IMR-90 (cell line): ENCODE measurements at regions of chr4 and their contacts with region 1.

Region 1: DNA sequence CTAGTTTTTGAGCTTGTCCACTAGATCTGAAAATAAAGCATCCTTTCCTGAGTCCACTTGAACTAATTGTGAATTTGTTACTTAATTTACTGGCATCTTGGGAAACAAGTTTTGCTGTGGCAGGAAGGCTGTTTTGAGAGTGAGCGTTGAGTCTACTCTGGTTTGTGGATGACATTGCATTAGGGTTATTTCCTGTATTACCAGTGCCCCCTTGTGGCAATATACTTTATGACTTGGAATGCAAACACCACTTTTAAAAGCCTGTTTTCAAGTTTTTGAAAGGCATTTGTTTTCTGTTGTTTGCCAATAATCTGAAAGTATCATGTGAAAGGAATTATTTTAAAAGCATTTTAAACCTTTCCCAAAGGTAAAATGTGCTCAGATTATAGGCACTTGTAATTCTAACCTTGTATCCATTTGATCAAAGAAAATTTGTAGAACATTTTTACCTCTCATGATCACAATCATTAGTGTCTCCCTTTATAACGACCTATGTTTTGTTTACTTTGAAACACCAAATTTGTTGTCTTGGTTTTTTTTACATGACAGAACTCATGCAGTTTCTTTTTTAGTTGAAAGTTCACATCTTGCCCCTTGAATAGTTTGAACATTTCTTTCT is 18.0 kb upstream of the CYP2U1 start:
- DNase-seq: peak; percentile 76
- ATAC-seq: peak; percentile 85
- H3K4me3 ChIP-seq: no peak overlapping the region
- H3K27ac ChIP-seq: no peak overlapping the region
- H3K4me1 ChIP-seq: no peaks in the 10 kb centered on the region
- H3K27me3 ChIP-seq: no peaks in the 10 kb centered on the region
- CTCF ChIP-seq: peak; percentile 88
- POLR2A ChIP-seq: no peak
- RAD21 ChIP-seq: peak; percentile 92

Region 2: DNA sequence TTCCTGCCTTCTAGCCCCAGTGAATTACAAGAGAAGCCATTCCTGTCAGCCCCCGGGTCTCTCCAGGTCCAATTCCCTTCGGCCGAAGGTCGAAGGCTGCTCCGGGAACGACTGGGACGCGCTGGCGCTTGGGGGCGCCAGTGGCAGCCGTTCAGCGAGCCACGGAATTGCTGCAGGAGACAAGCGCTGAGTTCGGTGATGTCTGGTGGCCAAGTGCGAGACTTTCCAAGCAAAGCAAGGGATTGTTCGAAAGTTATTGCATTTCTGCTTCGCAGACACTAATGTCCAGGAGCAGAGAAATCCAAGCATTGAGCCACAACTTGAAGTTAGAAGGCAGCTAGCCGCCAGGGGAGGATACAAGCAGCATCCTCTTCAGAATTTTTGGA is 876.2 kb before region 1 on chr4:
- CTCF ChIA-PET with region 1: no interaction called
- POLR2A ChIA-PET with region 1: no interaction called
- dilution Hi-C with region 1: no loop called
- in situ Hi-C with region 1: no loop called
- intact Hi-C with region 1: loop called (anchors 5 kb)
- DNase-seq: peak; percentile 2
- ATAC-seq: peak; percentile 52
- H3K4me3 ChIP-seq: no peak overlapping the region
- H3K27ac ChIP-seq: no peak overlapping the region
- H3K4me1 ChIP-seq: no peaks in the 10 kb centered on the region
- H3K27me3 ChIP-seq: peaks cover 37% of the 10 kb centered on the region
- CTCF ChIP-seq: peak; percentile 44
- POLR2A ChIP-seq: no peak
- RAD21 ChIP-seq: peak; percentile 29

Region 3: GRCh38 chr4:107196312-107196711 is 717.1 kb before region 1 on chr4:
- CTCF ChIA-PET with region 1: interaction called, 4 read pairs
- POLR2A ChIA-PET with region 1: no interaction called
- dilution Hi-C with region 1: no loop called
- in situ Hi-C with region 1: no loop called
- intact Hi-C with region 1: loop called (anchors 5 kb)
- DNase-seq: no peak
- ATAC-seq: no peak
- H3K4me3 ChIP-seq: no peak overlapping the region
- H3K27ac ChIP-seq: no peak overlapping the region
- H3K4me1 ChIP-seq: no peaks in the 10 kb centered on the region
- H3K27me3 ChIP-seq: no peaks in the 10 kb centered on the region
- CTCF ChIP-seq: no peak
- POLR2A ChIP-seq: no peak
- RAD21 ChIP-seq: no peak

Region 4: DNA sequence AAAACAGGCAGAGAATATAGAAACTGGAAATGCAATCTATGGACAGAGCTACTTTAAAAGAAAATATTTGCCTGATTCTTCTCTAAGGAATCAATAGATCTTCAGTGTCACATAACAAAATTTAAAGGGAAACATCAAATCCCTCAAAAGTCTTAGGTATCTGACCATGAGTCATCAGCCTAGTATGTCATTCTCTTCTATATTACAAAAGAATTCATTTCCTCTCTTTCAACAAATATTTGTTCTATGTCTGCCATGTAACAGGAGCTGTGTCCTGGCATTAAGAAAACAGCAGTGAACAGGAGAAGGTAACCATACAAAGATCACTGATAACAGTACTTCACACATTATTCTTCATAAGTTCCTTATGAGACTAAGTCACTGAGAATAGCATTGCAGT is 633.7 kb before region 1 on chr4:
- CTCF ChIA-PET with region 1: no interaction called
- POLR2A ChIA-PET with region 1: no interaction called
- dilution Hi-C with region 1: no loop called
- in situ Hi-C with region 1: no loop called
- intact Hi-C with region 1: loop called (anchors 10 kb)
- DNase-seq: peak; percentile 39
- ATAC-seq: peak; percentile 36
- H3K4me3 ChIP-seq: no peak overlapping the region
- H3K27ac ChIP-seq: no peak overlapping the region
- H3K4me1 ChIP-seq: peaks cover 3% of the 10 kb centered on the region; the same call in 1 of the 2 replicates
- H3K27me3 ChIP-seq: no peaks in the 10 kb centered on the region
- CTCF ChIP-seq: no peak
- POLR2A ChIP-seq: no peak
- RAD21 ChIP-seq: no peak

Region 5: DNA sequence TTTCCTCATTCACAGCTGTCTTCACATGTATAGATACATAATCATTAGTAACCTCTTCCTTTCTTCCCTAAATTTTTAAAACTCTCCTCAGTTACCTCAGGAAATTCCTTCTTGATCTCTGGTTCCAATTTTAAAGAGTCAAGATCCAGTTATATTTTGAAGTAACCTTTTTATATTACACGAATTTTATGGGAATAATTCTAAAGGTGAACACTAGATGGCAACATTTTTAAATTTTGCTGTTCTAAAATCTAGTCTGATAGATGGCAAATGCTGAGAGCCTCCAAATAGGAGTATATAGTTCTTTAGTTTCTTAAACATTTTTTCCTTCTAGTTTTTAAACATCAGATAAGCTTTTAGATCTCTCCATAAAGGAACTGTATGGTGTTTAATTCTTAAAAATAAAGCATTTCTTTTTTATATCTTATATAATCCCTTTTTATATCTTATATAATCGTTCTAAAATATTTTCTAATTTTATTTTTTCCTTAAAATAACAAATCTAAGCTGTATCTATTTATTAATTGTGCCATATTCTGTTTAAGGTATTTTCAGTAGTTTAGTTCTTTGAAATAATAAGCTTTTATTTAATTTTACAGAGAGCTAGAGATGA is 155.4 kb before region 1 on chr4:
- CTCF ChIA-PET with region 1: interaction called, 6 read pairs
- POLR2A ChIA-PET with region 1: no interaction called
- dilution Hi-C with region 1: no loop called
- in situ Hi-C with region 1: loop called (anchors 5 kb)
- intact Hi-C with region 1: loop called (anchors 1 kb)
- DNase-seq: peak; percentile 44
- ATAC-seq: peak; percentile 57; the same call in 1 of the 2 replicates
- H3K4me3 ChIP-seq: no peak overlapping the region
- H3K27ac ChIP-seq: no peak overlapping the region
- H3K4me1 ChIP-seq: no peaks in the 10 kb centered on the region
- H3K27me3 ChIP-seq: peaks cover 12% of the 10 kb centered on the region
- CTCF ChIP-seq: peak; percentile 52
- POLR2A ChIP-seq: no peak
- RAD21 ChIP-seq: peak; percentile 50

Region 6: GRCh38 chr4:107824353-107825071 is 88.9 kb before region 1 on chr4 and contains the start of gene SGMS2:
- CTCF ChIA-PET with region 1: no interaction called
- POLR2A ChIA-PET with region 1: no interaction called
- dilution Hi-C with region 1: no loop called
- in situ Hi-C with region 1: no loop called
- intact Hi-C with region 1: loop called (anchors 5 kb)
- DNase-seq: peak; percentile 84
- ATAC-seq: peak; percentile 93
- H3K4me3 ChIP-seq: peak within 1 kb of the TSS; percentile 64
- H3K27ac ChIP-seq: peak within 1 kb of the TSS; percentile 32
- H3K4me1 ChIP-seq: peaks cover 2% of the 10 kb centered on the region
- H3K27me3 ChIP-seq: peaks cover 7% of the 10 kb centered on the region
- CTCF ChIP-seq: no peak
- POLR2A ChIP-seq: peak; percentile 83
- RAD21 ChIP-seq: peak; percentile 6; the same call in 1 of the 2 replicates
- total RNA-seq, gene SGMS2: 37.5 and 57.5 TPM in 2 replicates

Region 7: DNA sequence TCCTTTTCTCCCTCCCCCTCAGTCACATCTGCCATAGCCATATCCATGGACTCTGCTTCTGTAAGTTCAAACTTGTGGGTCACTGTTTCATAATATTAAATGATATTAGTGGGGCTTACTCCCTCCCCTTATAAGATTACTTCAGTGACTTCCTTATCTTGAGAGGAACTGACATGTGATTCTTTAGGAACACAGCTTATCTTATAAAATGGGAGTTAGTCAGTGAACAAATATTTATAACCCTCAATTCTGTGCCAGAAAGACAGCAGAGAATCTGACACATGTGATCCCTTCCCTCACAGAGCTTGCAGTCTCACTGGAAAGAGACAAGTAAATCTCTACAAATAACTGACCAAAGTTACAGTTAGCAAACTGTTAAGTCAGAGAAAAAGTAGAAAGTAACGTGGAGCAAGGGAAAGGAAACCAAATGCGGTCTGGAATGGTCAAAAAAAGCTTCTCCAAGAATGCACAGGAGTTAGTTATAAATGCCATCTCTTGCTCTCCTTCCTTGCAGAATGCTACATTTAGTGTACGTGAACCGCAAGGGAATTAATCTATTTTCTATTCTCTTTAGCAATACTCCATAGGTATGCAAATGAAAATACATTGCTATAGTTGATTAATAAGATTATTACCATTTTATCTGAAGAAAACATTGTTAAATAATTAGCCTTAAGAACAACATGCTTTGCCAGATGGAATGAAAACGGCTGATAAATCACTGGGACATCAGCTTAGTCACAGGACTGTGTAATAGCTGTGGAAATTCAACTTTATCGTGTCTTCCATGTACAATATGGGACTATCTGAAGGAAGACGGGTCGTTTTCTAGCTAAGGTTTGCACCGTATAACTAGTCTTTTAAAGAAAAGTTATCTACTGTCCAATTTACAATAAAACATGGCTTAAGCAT is 59.7 kb before region 1 on chr4:
- CTCF ChIA-PET with region 1: no interaction called
- POLR2A ChIA-PET with region 1: no interaction called
- dilution Hi-C with region 1: no loop called
- in situ Hi-C with region 1: no loop called
- intact Hi-C with region 1: no loop called
- DNase-seq: peak; percentile 72
- ATAC-seq: peak; percentile 76
- H3K4me3 ChIP-seq: no peak overlapping the region
- H3K27ac ChIP-seq: no peak overlapping the region
- H3K4me1 ChIP-seq: no peaks in the 10 kb centered on the region
- H3K27me3 ChIP-seq: no peaks in the 10 kb centered on the region
- CTCF ChIP-seq: no peak
- POLR2A ChIP-seq: no peak
- RAD21 ChIP-seq: no peak

Region 8: DNA sequence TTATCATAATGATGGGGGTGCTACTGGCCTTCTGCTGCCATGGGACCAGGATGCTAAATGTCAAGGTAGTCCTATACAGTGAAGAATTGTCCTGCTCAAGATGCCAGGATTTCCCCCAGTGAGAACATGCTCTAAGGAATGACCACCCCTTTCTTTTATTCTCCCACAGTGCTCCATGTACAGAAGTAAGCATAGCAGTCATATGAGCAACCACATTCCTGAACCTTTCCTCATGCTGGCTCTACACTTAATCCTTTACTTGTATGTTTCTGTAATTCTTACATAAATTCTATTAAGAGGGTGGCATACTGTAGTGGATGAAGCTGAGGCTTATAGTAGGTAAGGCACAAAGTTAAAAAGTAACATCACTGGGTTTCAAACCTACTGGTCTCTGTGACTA is 38.2 kb after region 1 on chr4:
- CTCF ChIA-PET with region 1: no interaction called
- POLR2A ChIA-PET with region 1: no interaction called
- dilution Hi-C with region 1: no loop called
- in situ Hi-C with region 1: no loop called
- intact Hi-C with region 1: no loop called
- DNase-seq: peak; percentile 89
- ATAC-seq: peak; percentile 97
- H3K4me3 ChIP-seq: no peak overlapping the region
- H3K27ac ChIP-seq: peak overlapping the region; percentile 35; the same call in 1 of the 2 replicates
- H3K4me1 ChIP-seq: peaks cover 8% of the 10 kb centered on the region
- H3K27me3 ChIP-seq: no peaks in the 10 kb centered on the region
- CTCF ChIP-seq: no peak
- POLR2A ChIP-seq: no peak
- RAD21 ChIP-seq: no peak